Left cardiac atrium (tissue), 4 donors: ENCODE measurements at regions of chr3 and their contacts with region 1.

Region 1: DNA sequence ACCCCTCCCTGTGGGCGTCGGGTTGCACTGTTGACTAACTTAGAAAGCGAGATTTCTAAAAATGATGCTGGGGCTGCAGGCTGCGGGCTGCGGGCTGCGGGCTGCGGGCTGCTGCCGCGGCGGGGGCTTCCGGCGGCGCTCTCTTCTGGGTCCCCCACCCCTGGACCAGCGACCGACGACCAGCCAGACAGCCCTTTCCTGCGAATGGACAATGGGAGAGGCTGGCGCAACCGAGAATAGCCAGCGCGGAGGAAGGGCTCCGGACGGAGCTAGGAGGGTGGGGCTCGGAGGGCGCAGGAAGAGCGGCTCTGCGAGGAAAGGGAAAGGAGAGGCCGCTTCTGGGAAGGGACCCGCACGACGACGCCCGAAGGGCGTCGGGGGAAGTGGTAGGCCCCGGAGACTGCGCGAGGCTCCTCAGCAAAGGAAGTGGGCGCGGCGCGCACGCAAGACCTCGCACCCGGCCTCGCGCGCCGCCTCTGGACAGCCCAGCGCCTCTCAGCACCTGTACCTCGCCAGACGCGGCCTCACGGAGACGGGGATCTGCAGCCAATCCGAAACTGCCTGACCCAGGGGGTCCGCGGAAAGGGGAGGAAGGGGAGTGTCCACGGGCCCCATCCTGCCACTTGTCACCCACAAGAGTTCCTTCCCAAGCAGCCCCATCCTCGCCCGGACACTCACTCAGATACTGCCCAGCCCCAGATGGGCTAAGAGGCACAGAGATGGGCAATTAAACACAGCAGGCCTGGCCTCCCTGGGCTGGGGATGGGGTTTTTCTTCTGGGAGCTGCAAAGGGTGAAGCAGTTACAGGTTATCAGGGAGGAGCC is 70.7 kb downstream of the SLC12A8 start:
- DNase-seq: peak; percentile 87
- ATAC-seq: peak; percentile 69 to 81

Region 2: DNA sequence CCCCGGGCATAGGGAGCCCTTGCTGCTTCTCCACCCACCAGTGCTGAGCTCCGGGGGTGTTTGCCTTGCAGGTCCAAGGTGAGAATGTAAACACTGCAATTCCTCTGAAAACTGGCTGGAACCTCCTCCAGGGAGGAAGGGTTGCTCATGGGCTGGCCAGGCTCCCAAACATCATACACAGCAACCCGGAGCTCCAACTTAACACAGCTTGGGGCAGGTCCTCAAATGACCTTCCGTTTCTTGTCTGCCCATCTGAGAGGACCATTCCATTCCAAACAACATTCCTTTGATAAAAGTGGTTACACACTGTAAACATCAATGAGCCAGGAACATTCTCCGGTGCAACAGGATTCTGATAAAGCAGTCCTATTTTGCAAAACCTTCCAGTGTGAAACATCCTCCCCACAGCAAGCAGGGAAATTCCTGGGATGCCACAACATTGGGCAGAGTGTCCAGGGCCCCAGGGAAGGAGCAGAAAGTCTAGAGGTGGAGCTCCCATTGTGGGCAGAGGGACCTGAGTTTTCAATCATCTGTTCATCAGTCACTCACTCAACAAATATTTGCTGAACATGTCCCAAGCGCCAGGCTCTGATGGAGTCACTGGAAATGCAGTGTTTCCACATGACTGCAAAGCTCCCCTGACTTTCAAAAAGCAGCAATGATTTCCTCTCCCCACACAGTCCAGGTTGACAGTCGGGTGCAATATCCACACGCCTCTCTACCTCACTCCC is 78.8 kb before region 1 on chr3:
- intact Hi-C with region 1: loop called (anchors 5 to 10 kb)
- DNase-seq: peak; percentile 70
- ATAC-seq: peak; percentile 42 to 61

Region 3: GRCh38 chr3:125257536-125257935 is 115.7 kb after region 1 on chr3:
- intact Hi-C with region 1: no loop called
- DNase-seq: no peak
- ATAC-seq: peak in 1 of 2 donors; percentile 19